Lower lobe of right lung (tissue), 2 donors: ENCODE measurements at regions of chr22 and their contacts with region 1.

Region 1: GRCh38 chr22:17501679-17502285 is 61.5 kb upstream of the SLC25A18 start:
- DNase-seq: no peak
- ATAC-seq: peak; percentile 82 to 88
- H3K4me3 ChIP-seq: no peak overlapping the region
- H3K27ac ChIP-seq: no peak overlapping the region
- H3K4me1 ChIP-seq: no peaks in the 10 kb centered on the region
- H3K27me3 ChIP-seq: no peaks in the 10 kb centered on the region
- CTCF ChIP-seq: peak; percentile 68

Region 2: DNA sequence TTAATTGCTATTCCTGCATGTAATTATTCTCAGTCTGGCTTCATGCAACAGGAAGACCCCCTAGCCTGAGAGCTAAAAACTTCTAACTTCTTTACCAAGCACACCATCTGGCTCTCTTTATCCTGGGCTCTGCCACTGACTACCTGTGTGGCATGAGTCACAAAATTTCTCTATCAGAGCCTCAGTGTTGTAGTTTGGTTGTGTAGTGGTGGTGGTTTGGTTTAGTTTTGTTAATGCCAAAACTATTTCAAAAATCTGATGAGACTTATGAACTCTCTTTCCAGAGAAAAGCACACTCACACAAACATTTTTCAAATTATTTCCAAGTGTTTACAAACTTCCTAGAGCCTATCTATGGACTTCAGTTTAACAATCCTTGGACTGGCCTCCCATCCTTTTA is 424.5 kb before region 1 on chr22:
- intact Hi-C with region 1: loop called (anchors 10 kb)
- DNase-seq: no peak
- ATAC-seq: no peak
- H3K4me3 ChIP-seq: no peak overlapping the region
- H3K27ac ChIP-seq: no peak overlapping the region
- H3K4me1 ChIP-seq: peaks cover 6% of the 10 kb centered on the region
- H3K27me3 ChIP-seq: no peaks in the 10 kb centered on the region
- CTCF ChIP-seq: no peak